ENCODE measurements at regions of chr15 and their contacts with region 1.

Region 1: GRCh38 chr15:43433165-43433564 is 59.8 kb downstream of the TP53BP1 start:
- DNase-seq: no peak
- H3K4me3 Mint-ChIP-seq: no peak overlapping the region
- H3K27ac Mint-ChIP-seq: no peak overlapping the region
- H3K4me1 Mint-ChIP-seq: no peaks in the 10 kb centered on the region
- H3K27me3 Mint-ChIP-seq: no peaks in the 10 kb centered on the region

Region 2: GRCh38 chr15:43346305-43346704 is 86.9 kb before region 1 on chr15:
- intact Hi-C with region 1: no loop called
- DNase-seq: no peak
- H3K4me3 Mint-ChIP-seq: no peak overlapping the region
- H3K27ac Mint-ChIP-seq: no peak overlapping the region
- H3K4me1 Mint-ChIP-seq: no peaks in the 10 kb centered on the region
- H3K27me3 Mint-ChIP-seq: no peaks in the 10 kb centered on the region

Region 3: GRCh38 chr15:43390723-43391122 is 42.4 kb before region 1 on chr15:
- intact Hi-C with region 1: loop called (anchors 5 kb)
- DNase-seq: no peak
- H3K4me3 Mint-ChIP-seq: no peak overlapping the region
- H3K27ac Mint-ChIP-seq: no peak overlapping the region
- H3K4me1 Mint-ChIP-seq: peaks cover 3% of the 10 kb centered on the region
- H3K27me3 Mint-ChIP-seq: no peaks in the 10 kb centered on the region

Region 4: DNA sequence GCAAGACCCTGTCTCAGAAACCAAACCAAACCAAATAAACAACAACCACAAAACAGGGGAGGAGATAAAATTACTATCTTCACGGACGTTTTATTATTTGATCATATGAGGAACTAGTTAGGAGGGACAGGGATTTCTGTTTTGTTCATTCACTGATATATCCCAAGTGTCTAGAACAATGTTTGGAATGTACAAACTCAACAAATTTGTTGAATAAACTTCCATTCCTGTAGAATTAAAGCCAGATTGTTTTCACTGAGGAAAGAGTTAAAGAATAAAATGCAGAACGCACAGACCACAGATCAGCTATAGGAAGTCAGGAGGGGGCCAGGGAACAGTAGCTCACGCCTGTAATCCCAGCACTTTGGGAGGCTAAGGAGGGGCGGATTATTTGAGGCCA is 191.9 kb after region 1 on chr15:
- intact Hi-C with region 1: no loop called
- DNase-seq: no peak
- H3K4me3 Mint-ChIP-seq: no peak overlapping the region
- H3K27ac Mint-ChIP-seq: no peak overlapping the region
- H3K4me1 Mint-ChIP-seq: no peaks in the 10 kb centered on the region
- H3K27me3 Mint-ChIP-seq: peaks cover 12% of the 10 kb centered on the region